ENCODE measurements at regions of chr17 and their contacts with region 1.

Region 1: GRCh38 chr17:33769066-33769465 is 476.0 kb upstream of the ASIC2 start:
- DNase-seq: no peak
- H3K4me3 ChIP-seq: no peak overlapping the region
- H3K27ac ChIP-seq: no peak overlapping the region
- H3K4me1 ChIP-seq: no peaks in the 10 kb centered on the region
- H3K27me3 ChIP-seq: no peaks in the 10 kb centered on the region

Region 2: GRCh38 chr17:33550261-33550660 is 218.8 kb before region 1 on chr17:
- in situ Hi-C with region 1: no loop called
- DNase-seq: no peak
- H3K4me3 ChIP-seq: no peak overlapping the region
- H3K27ac ChIP-seq: no peak overlapping the region
- H3K4me1 ChIP-seq: no peaks in the 10 kb centered on the region
- H3K27me3 ChIP-seq: no peaks in the 10 kb centered on the region

Region 3: GRCh38 chr17:33832262-33832661 is 63.2 kb after region 1 on chr17:
- in situ Hi-C with region 1: loop called (anchors 10 kb)
- DNase-seq: no peak
- H3K4me3 ChIP-seq: no peak overlapping the region
- H3K27ac ChIP-seq: no peak overlapping the region
- H3K4me1 ChIP-seq: no peaks in the 10 kb centered on the region
- H3K27me3 ChIP-seq: no peaks in the 10 kb centered on the region